Activated CD8-positive, alpha-beta T cell treated with anti-CD3 and anti-CD28 coated beads, Interleukin-2, amount 10 ng/mL, durations not matched to agents 7 days and 5 days (primary cell): ENCODE measurements at regions of chr1 and their contacts with region 1.

Region 1: GRCh38 chr1:226708342-226708780 is 30.7 kb downstream of the ITPKB start:
- DNase-seq: no peak
- ATAC-seq: no peak
- H3K4me3 Mint-ChIP-seq: no peak overlapping the region
- H3K27ac Mint-ChIP-seq: peak overlapping the region; percentile 80
- H3K4me1 Mint-ChIP-seq: peaks cover 76% of the 10 kb centered on the region
- H3K27me3 Mint-ChIP-seq: no peaks in the 10 kb centered on the region

Region 2: DNA sequence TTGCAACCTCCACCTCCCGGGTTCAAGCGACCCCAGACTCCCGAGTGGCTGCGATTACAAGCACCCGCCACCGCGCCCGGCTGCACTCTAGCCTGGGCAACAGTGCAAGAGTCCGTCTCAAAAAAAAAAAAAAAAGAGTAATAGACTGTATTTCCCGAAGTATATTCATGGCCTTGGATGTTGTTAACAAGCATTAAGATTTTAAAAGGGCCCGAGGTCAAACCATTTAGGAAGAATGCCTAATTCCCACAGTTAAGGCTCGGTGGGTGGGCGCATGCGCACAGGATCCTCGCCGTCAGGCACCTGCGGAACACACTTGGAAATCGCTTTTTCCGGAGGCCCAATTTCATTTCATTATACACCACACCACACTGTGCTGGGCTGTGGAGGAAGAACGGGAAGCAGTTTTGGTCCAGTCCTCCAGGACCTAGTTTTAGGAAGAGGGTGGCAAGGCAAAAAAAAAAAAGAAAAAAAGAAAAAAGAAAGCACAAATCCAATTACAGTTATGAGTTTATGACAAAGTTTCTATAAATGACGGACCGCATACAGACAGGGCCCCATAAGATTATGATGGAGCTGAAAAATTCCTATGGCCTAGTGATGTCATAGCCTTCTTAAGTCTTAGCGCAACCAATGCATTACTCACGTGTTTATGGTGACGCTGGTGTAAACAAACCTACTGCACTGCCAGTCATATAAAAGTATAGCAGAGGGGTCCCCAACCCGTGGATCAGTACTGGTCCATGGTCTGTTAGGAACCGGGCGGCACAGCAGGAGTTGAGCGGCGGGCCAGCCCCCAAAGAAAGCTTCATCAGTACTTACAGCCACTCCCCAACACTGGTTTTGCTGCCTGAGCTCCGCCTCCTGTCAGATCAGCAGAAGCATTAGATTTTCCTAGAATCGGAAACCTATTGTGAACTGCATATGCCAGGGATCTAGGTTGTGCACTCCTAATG is 607.6 kb before region 1 on chr1:
- CTCF ChIA-PET with region 1: no interaction called
- POLR2A ChIA-PET with region 1: no interaction called
- DNase-seq: peak; percentile 44
- ATAC-seq: peak; percentile 53
- H3K4me3 Mint-ChIP-seq: peak overlapping the region; percentile 80
- H3K27ac Mint-ChIP-seq: peak overlapping the region; percentile 30
- H3K4me1 Mint-ChIP-seq: peaks cover 16% of the 10 kb centered on the region
- H3K27me3 Mint-ChIP-seq: peaks cover 17% of the 10 kb centered on the region

Region 3: DNA sequence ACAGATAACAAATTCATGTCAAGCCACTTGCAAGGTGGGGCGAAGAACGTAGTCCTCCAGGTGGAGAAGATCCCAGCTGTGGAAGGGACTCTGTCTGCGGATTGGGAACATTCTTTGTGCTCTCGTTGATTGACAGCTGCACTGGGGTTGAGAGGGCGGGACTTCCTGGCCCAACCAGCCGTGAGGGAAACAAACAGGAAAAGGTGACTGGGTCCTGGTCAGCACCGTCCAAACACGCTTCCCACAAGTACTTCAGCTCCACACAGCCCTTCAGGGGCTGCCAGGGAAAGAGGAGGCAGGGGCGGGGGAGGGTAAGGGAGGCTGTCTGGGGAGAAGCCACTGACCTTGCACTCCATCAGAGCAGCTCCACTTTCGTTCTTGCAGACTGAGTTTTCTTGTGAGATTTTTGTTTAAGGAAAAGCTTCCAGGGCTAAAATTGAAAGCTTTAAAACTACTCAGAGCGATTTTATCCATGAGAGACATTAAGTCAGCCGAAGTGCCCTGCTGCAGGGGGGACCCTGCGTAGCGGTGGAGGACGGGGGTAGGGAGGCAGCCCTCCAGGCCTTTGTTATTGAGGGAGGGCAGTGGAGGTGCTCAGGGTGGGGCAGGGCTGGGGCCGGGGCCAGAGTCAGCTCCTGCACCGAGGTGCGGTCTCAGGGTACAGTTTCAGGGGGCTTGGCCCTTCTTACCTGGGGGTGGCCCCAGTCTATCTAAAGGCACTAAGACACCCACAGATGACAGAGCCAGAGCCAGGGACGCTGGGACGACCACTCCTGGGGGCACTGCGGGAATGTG is 181.4 kb before region 1 on chr1:
- CTCF ChIA-PET with region 1: no interaction called
- POLR2A ChIA-PET with region 1: no interaction called
- DNase-seq: no peak
- ATAC-seq: no peak
- H3K4me3 Mint-ChIP-seq: no peak overlapping the region
- H3K27ac Mint-ChIP-seq: no peak overlapping the region
- H3K4me1 Mint-ChIP-seq: no peaks in the 10 kb centered on the region
- H3K27me3 Mint-ChIP-seq: peaks cover 12% of the 10 kb centered on the region

Region 4: GRCh38 chr1:226596531-226597165 is 111.7 kb before region 1 on chr1:
- CTCF ChIA-PET with region 1: no interaction called
- POLR2A ChIA-PET with region 1: no interaction called
- DNase-seq: no peak
- ATAC-seq: no peak
- H3K4me3 Mint-ChIP-seq: no peak overlapping the region
- H3K27ac Mint-ChIP-seq: no peak overlapping the region
- H3K4me1 Mint-ChIP-seq: no peaks in the 10 kb centered on the region
- H3K27me3 Mint-ChIP-seq: peaks cover 9% of the 10 kb centered on the region

Region 5: DNA sequence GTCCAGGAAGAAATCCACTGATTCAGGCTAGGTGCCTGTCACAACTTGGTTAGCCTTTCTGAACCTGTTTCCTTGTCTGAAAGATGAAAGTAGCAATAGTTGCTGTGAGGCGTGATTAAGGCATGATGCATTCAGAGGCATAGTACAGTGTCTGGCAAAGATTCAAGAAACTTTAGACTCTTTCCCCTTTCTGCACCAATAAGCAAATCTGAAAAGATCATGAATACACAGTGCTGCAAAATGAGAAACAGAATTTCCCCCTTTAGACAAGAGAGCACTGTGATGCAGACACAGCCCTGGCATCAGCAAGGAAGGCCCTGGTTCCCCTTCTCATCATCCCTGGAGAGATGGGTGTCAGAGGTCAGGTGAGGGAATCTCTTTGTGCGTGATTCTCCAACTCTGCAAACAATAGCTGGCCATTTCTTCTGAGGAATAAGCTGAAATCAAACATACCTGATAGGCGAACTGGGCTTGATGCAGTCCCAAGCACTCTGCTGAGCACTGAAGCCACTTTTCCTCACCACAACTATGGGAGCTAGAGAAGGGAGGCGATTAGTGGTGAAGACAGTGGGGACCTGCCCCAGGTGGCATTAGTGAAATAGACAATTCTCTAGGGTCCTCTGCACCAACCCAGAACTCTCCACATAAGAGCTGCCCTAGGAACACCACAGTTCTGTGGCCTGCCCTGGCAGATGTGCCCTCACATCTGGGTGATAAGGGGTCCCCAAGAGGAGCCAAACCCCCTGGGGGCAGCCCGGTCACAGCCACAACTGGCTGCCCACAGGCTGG is 11.0 kb before region 1 on chr1:
- CTCF ChIA-PET with region 1: interaction called, 34 read pairs
- POLR2A ChIA-PET with region 1: interaction called, 5 read pairs
- DNase-seq: no peak
- ATAC-seq: peak; percentile 10
- H3K4me3 Mint-ChIP-seq: no peak overlapping the region
- H3K27ac Mint-ChIP-seq: peak overlapping the region; percentile 68
- H3K4me1 Mint-ChIP-seq: peaks cover 69% of the 10 kb centered on the region
- H3K27me3 Mint-ChIP-seq: no peaks in the 10 kb centered on the region

Region 6: DNA sequence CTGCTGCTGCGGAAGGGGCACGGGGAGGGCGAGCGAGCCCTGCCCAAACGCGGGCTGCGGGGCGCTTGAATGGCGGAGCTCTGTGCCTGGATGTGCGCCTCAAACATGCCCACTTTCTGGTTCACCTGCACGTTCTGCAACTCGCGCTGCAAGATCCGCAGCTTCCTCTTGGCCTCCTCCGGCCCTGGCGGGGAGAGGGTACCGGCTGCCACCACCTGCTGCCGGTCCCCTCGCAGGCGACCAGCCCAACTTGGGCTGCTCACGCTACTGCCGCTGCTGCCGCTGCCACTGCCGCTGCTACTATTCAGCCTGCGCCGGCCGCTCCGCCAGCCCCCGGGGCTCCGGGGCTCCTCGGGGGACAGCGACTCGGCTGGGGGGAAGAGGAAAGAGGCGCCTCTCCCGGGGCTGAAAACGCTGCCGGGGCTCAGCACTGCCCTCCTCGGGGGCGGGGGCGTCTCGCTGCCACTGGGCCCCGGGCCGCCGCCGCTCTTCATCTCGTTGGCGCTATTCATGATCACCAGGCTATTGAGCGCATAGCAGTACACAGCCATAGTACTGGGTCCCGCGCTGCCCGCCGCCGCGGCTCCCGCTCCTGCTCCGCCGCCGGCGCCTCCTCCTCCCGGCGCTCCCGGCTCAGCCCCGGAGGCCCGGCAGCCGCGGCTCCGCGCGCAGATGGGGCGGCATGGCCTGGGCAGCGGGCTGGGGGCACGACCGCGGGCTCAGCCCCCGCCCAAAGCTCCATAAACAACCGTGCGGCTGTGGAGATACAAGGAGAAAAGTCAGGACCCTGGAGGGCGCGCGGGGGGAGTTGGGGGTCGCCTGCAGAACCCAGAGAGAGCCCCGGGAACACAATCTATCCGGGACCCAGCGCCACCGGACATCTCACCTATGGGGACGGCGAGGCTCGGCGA is 28.8 kb after region 1 on chr1:
- CTCF ChIA-PET with region 1: interaction called, 89 read pairs
- POLR2A ChIA-PET with region 1: interaction called, 11 read pairs
- DNase-seq: peak; percentile 69
- ATAC-seq: peak; percentile 43
- H3K4me3 Mint-ChIP-seq: peak overlapping the region; percentile 91
- H3K27ac Mint-ChIP-seq: peak overlapping the region; percentile 90
- H3K4me1 Mint-ChIP-seq: peaks cover 56% of the 10 kb centered on the region
- H3K27me3 Mint-ChIP-seq: no peaks in the 10 kb centered on the region

Region 7: GRCh38 chr1:226763905-226764264 is 55.5 kb after region 1 on chr1:
- CTCF ChIA-PET with region 1: no interaction called
- POLR2A ChIA-PET with region 1: no interaction called
- DNase-seq: no peak
- ATAC-seq: peak; percentile 23
- H3K4me3 Mint-ChIP-seq: no peak overlapping the region
- H3K27ac Mint-ChIP-seq: no peak overlapping the region
- H3K4me1 Mint-ChIP-seq: peaks cover 20% of the 10 kb centered on the region
- H3K27me3 Mint-ChIP-seq: peaks cover 7% of the 10 kb centered on the region